Activated CD4-positive, alpha-beta T cell treated with anti-CD3 and anti-CD28 coated beads, Interleukin-2, amount 10 ng/mL, durations not matched to agents 24 days and 14 days (primary cell): ENCODE measurements at regions of chr17 and their contacts with region 1.

Region 1: GRCh38 chr17:31508288-31509094 is 117.0 kb downstream of the RAB11FIP4 start:
- DNase-seq: peak; percentile 94
- H3K4me3 Mint-ChIP-seq: peak overlapping the region; percentile 83
- H3K27ac Mint-ChIP-seq: peak overlapping the region; percentile 99
- H3K4me1 Mint-ChIP-seq: peaks cover 47% of the 10 kb centered on the region
- H3K27me3 Mint-ChIP-seq: no peaks in the 10 kb centered on the region

Region 2: GRCh38 chr17:31313982-31314784 is 194.3 kb before region 1 on chr17 and contains the start of gene EVI2B:
- intact Hi-C with region 1: loop called (anchors 5 kb)
- DNase-seq: peak; percentile 71
- H3K4me3 Mint-ChIP-seq: peak within 1 kb of the TSS; percentile 93
- H3K27ac Mint-ChIP-seq: peak within 1 kb of the TSS; percentile 97
- H3K4me1 Mint-ChIP-seq: peaks cover 44% of the 10 kb centered on the region
- H3K27me3 Mint-ChIP-seq: no peaks in the 10 kb centered on the region
- total RNA-seq, gene EVI2B: 16.6 and 18.7 TPM in 2 replicates

Region 3: DNA sequence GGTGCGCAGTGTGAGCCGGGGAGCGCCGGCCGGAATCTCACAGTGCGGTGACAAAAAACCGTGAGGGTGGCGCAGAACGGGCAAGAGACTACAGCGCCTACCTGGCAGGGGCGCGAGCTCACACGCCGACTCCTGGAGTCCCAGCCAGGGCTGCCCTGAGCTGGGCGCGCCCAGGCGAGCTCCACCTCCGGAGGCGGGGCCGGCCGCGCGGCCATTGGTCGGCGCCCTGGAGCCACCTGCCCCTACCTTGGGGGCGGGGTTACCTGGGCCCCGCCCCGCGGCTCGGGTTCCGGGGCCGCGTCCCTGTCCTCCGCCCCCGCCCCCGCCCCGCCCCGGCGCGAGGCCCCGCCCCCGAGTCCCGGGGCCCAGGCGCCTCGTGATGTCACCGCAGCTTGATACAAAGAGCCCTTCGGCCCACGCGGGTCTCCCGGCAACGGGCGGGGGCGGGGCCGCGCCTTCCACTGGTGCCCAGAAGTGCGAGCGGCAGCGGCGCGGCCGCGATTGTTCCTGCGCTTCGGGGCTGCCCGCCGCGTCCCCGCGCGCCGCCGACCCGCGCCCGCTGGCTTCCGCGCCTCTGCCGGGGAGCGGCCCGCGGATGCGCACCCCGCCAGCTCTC is 20.7 kb before region 1 on chr17:
- intact Hi-C with region 1: loop called (anchors 1 kb)
- DNase-seq: peak; percentile 97
- H3K4me3 Mint-ChIP-seq: peak overlapping the region; percentile 94
- H3K27ac Mint-ChIP-seq: peak overlapping the region; percentile 38
- H3K4me1 Mint-ChIP-seq: peaks cover 43% of the 10 kb centered on the region
- H3K27me3 Mint-ChIP-seq: peaks cover 5% of the 10 kb centered on the region

Region 4: GRCh38 chr17:31494259-31495021 is 14.1 kb before region 1 on chr17:
- intact Hi-C with region 1: loop called (anchors 1 kb)
- DNase-seq: peak; percentile 89
- H3K4me3 Mint-ChIP-seq: peak overlapping the region; percentile 62
- H3K27ac Mint-ChIP-seq: peak overlapping the region; percentile 94
- H3K4me1 Mint-ChIP-seq: peaks cover 62% of the 10 kb centered on the region
- H3K27me3 Mint-ChIP-seq: no peaks in the 10 kb centered on the region